ENCODE measurements at regions of chr1 and their contacts with region 1.

Region 1: DNA sequence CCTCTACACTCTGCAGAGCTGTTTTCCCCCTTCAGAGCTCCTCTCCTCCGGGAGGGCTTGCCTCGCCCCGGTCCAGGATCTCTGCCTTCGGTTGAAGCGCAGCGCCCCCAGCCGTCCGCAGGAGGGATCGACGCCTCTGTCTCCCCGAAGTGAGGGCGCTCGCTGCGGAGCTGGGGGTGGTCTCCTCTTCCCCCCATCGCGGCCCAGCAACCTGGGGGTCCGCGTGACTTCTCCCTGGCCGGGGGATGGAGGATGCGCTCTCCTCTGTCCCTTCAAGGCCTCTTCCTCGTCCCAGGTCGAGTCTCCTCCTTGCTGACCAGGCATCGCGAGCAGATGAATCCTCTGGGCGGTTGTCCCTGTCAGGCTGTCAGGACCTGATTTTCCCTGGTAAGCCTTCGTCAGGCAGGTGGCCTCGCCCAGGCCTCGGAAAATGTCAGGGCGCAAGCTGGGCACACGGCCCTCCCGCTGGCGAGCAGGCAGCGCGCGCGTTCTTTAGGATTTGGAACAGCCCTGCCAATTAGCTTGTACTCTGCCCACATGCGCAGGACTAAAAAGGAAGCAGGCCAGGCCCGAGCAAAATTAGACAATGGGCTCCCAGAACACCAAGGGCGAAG is 90.5 kb downstream of the EDEM3 start:
- DNase-seq: peak; percentile 77 to 90
- ATAC-seq: peak; percentile 88 to 93 (median 90)
- H3K4me3 ChIP-seq: peak overlapping the region; percentile 67
- H3K27ac ChIP-seq: peak overlapping the region; percentile 71
- H3K4me1 ChIP-seq: peaks cover 13% of the 10 kb centered on the region
- H3K27me3 ChIP-seq: no peaks in the 10 kb centered on the region
- CTCF ChIP-seq: peak; percentile 98

Region 2: GRCh38 chr1:184242507-184242943 is 421.6 kb before region 1 on chr1:
- intact Hi-C with region 1: loop called in 1 of 2 experiments (anchors 2 kb)
- DNase-seq: no peak
- ATAC-seq: peak; percentile 58 to 94 (median 85)
- H3K4me3 ChIP-seq: no peak overlapping the region
- H3K27ac ChIP-seq: peak overlapping the region; percentile 39
- H3K4me1 ChIP-seq: peaks cover 12% of the 10 kb centered on the region
- H3K27me3 ChIP-seq: no peaks in the 10 kb centered on the region
- CTCF ChIP-seq: peak; percentile 37

Region 3: DNA sequence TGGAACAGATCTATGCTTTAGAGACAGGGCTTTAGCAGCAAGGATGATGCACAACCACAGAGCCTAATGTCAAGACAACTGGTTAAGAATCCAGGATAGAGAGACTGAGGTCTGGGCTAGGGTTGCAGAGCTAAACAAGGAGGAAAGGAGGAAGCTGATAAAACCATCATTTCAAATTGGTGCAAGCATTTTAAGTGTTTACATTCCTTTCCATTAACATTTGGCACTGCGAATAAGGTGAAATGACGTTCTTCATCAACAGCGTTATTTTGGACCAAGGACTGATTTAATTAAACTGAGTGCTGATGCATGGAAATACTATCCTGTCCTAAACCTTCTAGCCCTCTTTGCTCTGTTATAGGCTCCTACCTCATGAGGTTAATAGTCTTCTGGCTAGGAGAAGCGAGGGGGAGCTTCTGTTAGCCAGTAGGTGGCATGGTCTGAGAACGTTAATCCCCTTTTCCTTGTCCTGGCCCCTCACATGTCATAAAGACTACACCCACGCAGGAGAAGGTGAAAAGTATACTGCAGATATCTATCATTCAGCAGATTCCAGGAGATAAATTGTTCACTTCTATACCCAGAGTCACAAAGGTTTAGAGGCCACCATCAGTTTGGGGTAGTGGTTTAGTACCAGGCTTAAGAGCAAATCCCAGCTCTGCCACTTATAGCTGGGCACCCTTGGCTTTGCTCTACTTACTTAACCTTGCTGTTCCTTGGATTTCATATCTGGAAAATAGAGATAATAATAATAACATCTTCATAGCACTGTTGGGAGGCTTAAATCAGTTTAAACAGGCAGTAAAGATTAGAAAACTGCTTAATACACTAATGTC is 284.8 kb before region 1 on chr1:
- intact Hi-C with region 1: loop called (anchors 5 to 10 kb)
- DNase-seq: no peak
- ATAC-seq: peak; percentile 28 to 91 (median 86)
- H3K4me3 ChIP-seq: no peak overlapping the region
- H3K27ac ChIP-seq: no peak overlapping the region
- H3K4me1 ChIP-seq: peaks cover 6% of the 10 kb centered on the region
- H3K27me3 ChIP-seq: no peaks in the 10 kb centered on the region
- CTCF ChIP-seq: peak; percentile 24

Region 4: DNA sequence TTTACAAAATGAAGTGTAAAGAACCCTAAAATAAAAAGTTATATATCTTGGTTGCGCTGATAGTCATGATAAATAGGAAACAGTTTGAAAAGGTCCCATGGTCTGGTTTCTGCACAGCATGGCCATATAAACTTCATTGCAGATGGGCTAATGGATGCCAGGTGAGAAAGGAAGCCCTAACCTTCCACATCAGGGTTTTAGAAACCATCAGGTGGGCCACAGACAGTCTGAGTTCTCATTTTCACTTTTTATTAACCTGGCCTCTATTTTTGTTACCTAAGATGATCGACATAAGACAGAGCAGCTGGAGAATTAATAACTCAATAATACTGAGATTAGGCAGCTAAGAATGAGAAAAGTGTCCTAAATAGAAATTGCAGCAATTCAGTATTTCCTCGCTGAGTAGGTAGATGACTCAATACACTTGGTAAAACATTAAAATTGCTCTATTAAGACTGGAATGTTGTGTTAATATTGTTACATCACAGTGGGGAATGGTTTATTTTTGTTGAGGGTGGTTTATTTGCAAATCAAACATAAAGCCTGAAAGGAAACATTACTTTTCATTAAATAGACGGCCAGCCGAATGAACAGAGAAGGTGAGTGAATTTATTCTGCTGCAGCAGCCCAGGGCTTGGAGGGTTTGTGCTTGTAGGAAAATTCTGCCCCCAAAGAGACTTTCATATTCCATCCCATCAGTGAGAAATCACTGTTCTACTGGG is 256.2 kb before region 1 on chr1:
- intact Hi-C with region 1: no loop called
- DNase-seq: no peak
- ATAC-seq: peak in 1 of 4 donors; percentile 16
- H3K4me3 ChIP-seq: no peak overlapping the region
- H3K27ac ChIP-seq: peak overlapping the region; percentile 43
- H3K4me1 ChIP-seq: peaks cover 72% of the 10 kb centered on the region
- H3K27me3 ChIP-seq: no peaks in the 10 kb centered on the region
- CTCF ChIP-seq: no peak

Region 5: GRCh38 chr1:184483101-184483683 is 181.0 kb before region 1 on chr1:
- intact Hi-C with region 1: loop called in 1 of 2 experiments (anchors 10 kb)
- DNase-seq: peak; percentile 54 to 68
- ATAC-seq: peak; percentile 86 to 89 (median 86)
- H3K4me3 ChIP-seq: no peak overlapping the region
- H3K27ac ChIP-seq: peak overlapping the region; percentile 87
- H3K4me1 ChIP-seq: peaks cover 81% of the 10 kb centered on the region
- H3K27me3 ChIP-seq: no peaks in the 10 kb centered on the region
- CTCF ChIP-seq: peak; percentile 18

Region 6: DNA sequence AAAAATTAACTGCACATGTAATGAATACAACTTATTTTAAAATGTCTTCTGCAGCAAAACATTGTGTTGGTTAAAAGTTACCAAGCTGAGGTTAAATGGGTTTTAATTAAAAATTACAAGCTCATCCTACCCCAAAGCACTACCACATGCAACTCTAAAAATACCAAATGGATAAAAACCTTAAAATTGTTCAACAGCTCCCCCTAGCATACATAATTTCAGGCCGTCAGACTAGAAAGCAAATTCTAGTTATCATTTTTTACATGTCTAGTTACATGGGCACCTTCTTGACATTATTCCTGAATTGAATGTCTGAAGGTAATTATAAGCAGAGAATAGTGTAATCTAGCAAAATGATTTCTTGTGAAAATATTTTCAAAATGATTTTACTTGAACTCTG is 100.8 kb before region 1 on chr1:
- intact Hi-C with region 1: no loop called
- DNase-seq: no peak
- ATAC-seq: peak in 1 of 4 donors; percentile 39
- H3K4me3 ChIP-seq: no peak overlapping the region
- H3K27ac ChIP-seq: no peak overlapping the region
- H3K4me1 ChIP-seq: peaks cover 29% of the 10 kb centered on the region
- H3K27me3 ChIP-seq: no peaks in the 10 kb centered on the region
- CTCF ChIP-seq: peak; percentile 46

Region 7: GRCh38 chr1:184588701-184589100 is 75.4 kb before region 1 on chr1:
- intact Hi-C with region 1: loop called in 1 of 2 experiments (anchors 5 kb)
- DNase-seq: no peak
- ATAC-seq: no peak
- H3K4me3 ChIP-seq: no peak overlapping the region
- H3K27ac ChIP-seq: no peak overlapping the region
- H3K4me1 ChIP-seq: peaks cover 5% of the 10 kb centered on the region
- H3K27me3 ChIP-seq: no peaks in the 10 kb centered on the region
- CTCF ChIP-seq: no peak

Measured in psoas muscle (tissue), 8 donors.